CD4-positive, alpha-beta memory T cell (primary cell): ENCODE measurements at regions of chr9 and their contacts with region 1.

Region 1: DNA sequence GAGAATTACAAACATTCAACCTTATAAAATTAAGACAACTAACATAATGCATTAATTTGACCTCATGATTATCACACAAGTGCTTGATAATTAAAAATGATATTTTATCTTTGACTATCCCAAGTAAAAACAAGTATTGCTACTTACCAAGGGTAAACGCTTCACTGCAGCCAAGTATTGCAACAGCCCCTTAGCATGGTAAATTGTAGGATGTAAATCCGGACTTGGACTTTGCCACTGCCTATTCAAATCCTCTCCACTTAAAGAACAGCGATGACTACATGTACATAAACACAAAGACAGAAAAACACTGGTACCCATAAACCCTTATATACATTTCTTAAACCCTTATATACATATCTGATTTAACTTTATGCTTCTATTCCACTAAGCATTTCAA is 155.1 kb downstream of the AGTPBP1 start:
- DNase-seq: no peak
- H3K4me3 ChIP-seq: no peak overlapping the region
- H3K4me3 Mint-ChIP-seq: no peak overlapping the region
- H3K27ac ChIP-seq: no peak overlapping the region
- H3K27ac Mint-ChIP-seq: no peak overlapping the region
- H3K4me1 ChIP-seq: no peaks in the 10 kb centered on the region
- H3K4me1 Mint-ChIP-seq: peaks cover 0 to 4% (median 0%) of the 10 kb centered on the region in 4 donors
- H3K27me3 ChIP-seq: no peaks in the 10 kb centered on the region
- H3K27me3 Mint-ChIP-seq: no peaks in the 10 kb centered on the region

Region 2: GRCh38 chr9:85610074-85610860 is 23.6 kb after region 1 on chr9:
- CTCF ChIA-PET with region 1: interaction called, 12 read pairs
- POLR2A ChIA-PET with region 1: no interaction called
- intact Hi-C with region 1: no loop called
- DNase-seq: peak; percentile 50 to 67 (median 61)
- H3K4me3 ChIP-seq: no peak overlapping the region
- H3K4me3 Mint-ChIP-seq: peak overlapping the region in 5 of 8 donors; percentile 7 to 79 (median 55)
- H3K27ac ChIP-seq: no peak overlapping the region
- H3K27ac Mint-ChIP-seq: peak overlapping the region; percentile 2 to 91 (median 70)
- H3K4me1 ChIP-seq: peaks cover 7% of the 10 kb centered on the region
- H3K4me1 Mint-ChIP-seq: peaks cover 5 to 9% (median 7%) of the 10 kb centered on the region in 4 donors
- H3K27me3 ChIP-seq: no peaks in the 10 kb centered on the region
- H3K27me3 Mint-ChIP-seq: no peaks in the 10 kb centered on the region